Heart right ventricle (tissue), 16 donors: ENCODE measurements at regions of chr10 and their contacts with region 1.

Region 1: GRCh38 chr10:103942866-103943265 is 24.1 kb upstream of the SLK start:
- DNase-seq: no peak
- ATAC-seq: no peak
- H3K4me3 ChIP-seq: no peak overlapping the region
- H3K27ac ChIP-seq: no peak overlapping the region
- H3K4me1 ChIP-seq: no peaks in the 10 kb centered on the region
- H3K27me3 ChIP-seq: no peaks in the 10 kb centered on the region
- CTCF ChIP-seq: no peak

Region 2: DNA sequence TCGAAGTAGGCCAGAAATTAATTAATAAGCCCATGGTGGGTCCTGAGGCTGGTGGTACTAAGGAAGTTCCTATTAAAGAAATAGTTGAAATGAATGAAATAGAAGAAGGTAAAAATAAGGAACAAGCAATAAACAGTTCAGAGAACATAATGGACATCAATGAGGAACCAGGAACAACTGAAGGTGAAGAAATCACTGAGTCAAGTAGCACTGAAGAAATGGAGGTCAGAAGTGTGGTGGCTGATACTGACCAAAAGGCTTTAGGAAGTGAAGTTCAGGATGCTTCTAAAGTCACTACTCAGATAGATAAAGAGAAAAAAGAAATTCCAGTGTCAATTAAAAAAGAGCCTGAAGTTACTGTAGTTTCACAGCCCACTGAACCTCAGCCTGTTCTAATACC is 60.0 kb after region 1 on chr10:
- intact Hi-C with region 1: loop called in 1 of 10 experiments (anchors 10 kb)
- DNase-seq: no peak
- ATAC-seq: no peak
- H3K4me3 ChIP-seq: no peak overlapping the region
- H3K27ac ChIP-seq: no peak overlapping the region
- H3K4me1 ChIP-seq: no peaks in the 10 kb centered on the region
- H3K27me3 ChIP-seq: no peaks in the 10 kb centered on the region
- CTCF ChIP-seq: no peak

Region 3: DNA sequence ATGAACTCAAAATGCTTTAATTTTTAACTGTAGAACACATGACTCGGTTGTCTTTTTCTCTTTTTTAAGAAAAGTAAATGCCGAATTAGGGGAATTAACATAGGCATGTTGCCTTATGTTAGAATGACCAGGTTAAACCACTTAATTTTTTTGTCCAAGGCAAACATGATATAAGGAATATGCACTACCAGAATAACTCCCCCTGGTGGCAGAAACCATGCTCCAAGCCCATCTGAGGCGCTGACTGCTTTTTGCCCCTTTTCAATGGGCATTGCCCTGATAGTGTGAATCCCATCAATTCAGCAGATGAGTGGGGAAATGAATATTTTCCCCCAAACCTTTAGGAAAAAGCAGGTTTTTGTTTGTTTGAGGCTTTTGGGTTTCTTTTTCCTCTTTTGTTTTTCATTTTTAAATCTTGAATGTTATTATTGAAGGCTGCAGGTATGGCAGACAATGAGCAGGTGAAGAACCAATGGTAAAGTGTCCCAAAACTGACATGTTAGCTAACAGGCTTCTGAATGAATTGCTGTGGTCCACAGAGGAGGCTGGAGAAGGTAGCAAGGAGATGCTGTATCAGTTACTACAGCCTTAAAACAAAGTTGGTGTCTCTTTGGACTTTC is 982.5 kb after region 1 on chr10:
- intact Hi-C with region 1: no loop called
- DNase-seq: peak in 1 of 2 donors; percentile 8
- ATAC-seq: no peak
- H3K4me3 ChIP-seq: no peak overlapping the region
- H3K27ac ChIP-seq: no peak overlapping the region
- H3K4me1 ChIP-seq: no peaks in the 10 kb centered on the region
- H3K27me3 ChIP-seq: peaks cover 0 to 16% (median 0%) of the 10 kb centered on the region in 7 donors
- CTCF ChIP-seq: peak; percentile 31 to 67 (median 60)